MCF 10A (cell line): ENCODE measurements at regions of chr1 and their contacts with region 1.

Region 1: DNA sequence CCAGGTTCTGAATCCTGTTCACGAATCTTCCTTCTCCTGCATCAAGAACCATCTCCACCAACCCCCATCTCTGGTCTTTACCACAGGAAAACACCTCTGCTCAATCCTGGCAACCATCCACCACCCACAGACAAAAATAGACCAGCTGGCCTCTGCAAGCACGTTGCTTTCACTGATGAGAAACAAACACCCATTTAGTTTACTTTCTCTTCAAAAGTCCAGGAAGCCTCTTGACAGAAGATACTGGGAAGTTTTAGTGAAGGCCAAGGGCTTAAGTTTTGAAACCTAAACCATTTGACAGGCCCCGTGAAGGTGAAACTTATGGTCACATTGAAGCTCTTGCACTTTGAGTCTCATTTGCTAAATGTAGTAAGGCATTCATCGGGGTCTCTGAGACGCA is 122.6 kb upstream of the PPP2R5A start:
- DNase-seq: peak; percentile 88
- H3K4me3 Mint-ChIP-seq: no peak overlapping the region
- H3K27ac Mint-ChIP-seq: no peak overlapping the region
- H3K4me1 Mint-ChIP-seq: peaks cover 13% of the 10 kb centered on the region
- H3K27me3 Mint-ChIP-seq: no peaks in the 10 kb centered on the region
- CTCF ChIP-seq: no peak

Region 2: DNA sequence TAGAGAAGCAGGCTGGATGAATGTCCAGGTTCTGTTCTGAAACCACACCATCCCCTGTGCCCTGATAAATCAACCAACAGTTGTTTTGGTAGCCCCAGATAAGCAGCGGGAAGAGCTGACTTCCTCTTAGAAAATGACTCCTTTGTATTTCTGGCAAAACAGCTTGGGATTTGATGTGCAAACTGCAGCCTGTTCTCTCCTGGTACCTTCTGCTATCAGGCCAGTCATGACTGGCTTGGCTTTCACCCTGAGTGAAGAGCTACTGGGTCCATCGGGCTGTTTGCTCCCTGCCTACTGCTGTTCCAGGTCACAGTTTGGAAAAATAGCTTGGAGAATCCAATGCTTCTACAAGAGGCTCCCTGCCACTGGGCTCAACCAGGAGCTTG is 10.3 kb before region 1 on chr1:
- CTCF ChIA-PET with region 1: interaction called, 11 read pairs
- POLR2A ChIA-PET with region 1: interaction called, 4 read pairs
- intact Hi-C with region 1: no loop called
- DNase-seq: no peak
- H3K4me3 Mint-ChIP-seq: no peak overlapping the region
- H3K27ac Mint-ChIP-seq: no peak overlapping the region
- H3K4me1 Mint-ChIP-seq: no peaks in the 10 kb centered on the region
- H3K27me3 Mint-ChIP-seq: no peaks in the 10 kb centered on the region
- CTCF ChIP-seq: no peak

Region 3: DNA sequence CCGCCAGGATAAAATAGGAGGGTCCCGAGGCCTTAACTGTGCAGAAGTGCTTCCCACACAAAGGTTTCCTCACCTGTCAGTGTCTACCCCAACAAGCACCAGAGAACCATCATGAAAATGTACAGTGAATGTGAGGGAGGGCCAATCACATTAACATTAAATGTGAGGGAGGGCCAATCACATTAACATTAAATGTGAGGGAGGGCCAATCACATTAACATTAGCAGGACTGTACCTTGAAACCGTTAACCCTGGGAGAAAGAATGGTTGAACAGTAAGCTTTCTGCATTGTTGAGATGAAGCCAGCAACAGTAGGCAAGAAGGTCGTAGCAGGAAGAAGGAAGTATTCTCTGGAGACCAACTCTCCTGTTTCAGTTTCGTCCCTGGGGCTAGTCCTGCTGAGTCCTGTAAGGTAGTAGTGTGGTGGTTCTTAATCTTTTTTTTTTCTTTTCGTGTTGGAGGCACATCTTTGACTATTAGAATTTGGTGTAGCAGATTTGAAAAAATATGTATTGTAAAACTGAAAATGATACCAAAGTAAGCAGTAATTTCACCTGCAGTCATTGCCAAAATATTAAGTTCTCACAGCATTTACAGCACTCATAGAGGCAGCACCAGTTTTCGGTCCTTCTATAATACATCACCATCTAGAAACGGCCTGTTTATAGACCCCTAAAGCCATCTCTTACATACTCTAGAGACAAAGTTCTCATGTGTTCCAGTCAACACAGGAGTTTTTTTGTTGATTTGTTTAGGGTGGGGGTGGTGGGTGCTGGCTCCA is 24.0 kb after region 1 on chr1:
- CTCF ChIA-PET with region 1: no interaction called
- POLR2A ChIA-PET with region 1: no interaction called
- intact Hi-C with region 1: no loop called
- DNase-seq: no peak
- H3K4me3 Mint-ChIP-seq: no peak overlapping the region
- H3K27ac Mint-ChIP-seq: no peak overlapping the region
- H3K4me1 Mint-ChIP-seq: peaks cover 11% of the 10 kb centered on the region
- H3K27me3 Mint-ChIP-seq: no peaks in the 10 kb centered on the region
- CTCF ChIP-seq: no peak

Region 4: DNA sequence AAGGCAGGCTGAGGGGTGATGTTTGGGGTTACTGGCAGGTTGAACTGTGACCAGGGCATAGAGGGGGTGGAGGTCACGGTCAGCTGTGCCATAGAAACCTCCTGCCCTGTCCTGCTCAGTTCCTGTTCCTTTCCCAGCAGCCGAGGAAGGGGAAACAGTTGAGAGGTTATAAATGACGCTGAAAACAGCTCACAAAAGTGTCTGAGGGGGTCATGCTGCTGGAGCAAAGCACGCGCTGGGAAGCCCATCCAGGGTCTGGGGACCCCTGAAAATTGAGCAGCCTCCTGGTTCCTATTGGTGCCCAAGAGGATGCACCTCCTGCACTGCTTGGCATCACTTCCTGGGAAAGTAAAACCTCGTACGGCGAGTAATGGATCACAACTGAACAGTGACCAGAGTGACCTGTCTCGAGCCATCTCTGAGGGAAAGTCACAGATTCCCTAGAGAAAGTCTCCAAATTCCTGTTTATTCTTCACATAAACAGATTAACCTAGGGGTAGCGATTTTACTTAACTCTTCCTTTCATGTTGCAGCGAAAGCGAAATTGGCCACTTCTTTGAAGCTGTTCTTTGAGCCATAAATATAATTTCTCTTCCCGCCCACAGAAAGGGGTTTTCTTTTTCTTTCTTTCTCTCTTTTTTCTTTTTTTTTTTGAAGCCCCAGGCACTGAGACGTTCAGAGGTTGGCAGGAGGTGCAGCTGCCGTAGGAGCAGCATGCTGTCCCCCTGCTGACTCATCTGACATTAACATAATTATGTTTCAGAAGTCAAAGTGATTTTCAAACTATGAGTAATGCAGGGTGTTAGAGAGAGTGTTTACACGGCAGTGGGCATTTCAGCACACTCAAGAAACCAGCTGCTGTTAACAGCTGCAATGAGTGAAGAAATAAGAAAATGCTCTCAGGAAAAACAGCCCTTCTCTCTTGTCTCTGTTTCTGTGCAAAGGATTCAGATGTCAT is 404.2 kb after region 1 on chr1:
- CTCF ChIA-PET with region 1: no interaction called
- POLR2A ChIA-PET with region 1: no interaction called
- intact Hi-C with region 1: no loop called
- DNase-seq: peak; percentile 94
- H3K4me3 Mint-ChIP-seq: peak overlapping the region; percentile 72
- H3K27ac Mint-ChIP-seq: peak overlapping the region; percentile 78
- H3K4me1 Mint-ChIP-seq: peaks cover 17% of the 10 kb centered on the region
- H3K27me3 Mint-ChIP-seq: no peaks in the 10 kb centered on the region
- CTCF ChIP-seq: no peak